Activated T-helper 2 cell treated with anti-CD3 and anti-CD28 coated beads, Interferon-gamma antibody, Interleukin-2, Interleukin-4, amounts not matched to agents 10 μg/mL and 5 μg/mL and 100 μg/mL, durations not matched to agents 14 hours and 24 hours and 36 hours (primary cell): ENCODE measurements at regions of chr22 and their contacts with region 1.

Region 1: DNA sequence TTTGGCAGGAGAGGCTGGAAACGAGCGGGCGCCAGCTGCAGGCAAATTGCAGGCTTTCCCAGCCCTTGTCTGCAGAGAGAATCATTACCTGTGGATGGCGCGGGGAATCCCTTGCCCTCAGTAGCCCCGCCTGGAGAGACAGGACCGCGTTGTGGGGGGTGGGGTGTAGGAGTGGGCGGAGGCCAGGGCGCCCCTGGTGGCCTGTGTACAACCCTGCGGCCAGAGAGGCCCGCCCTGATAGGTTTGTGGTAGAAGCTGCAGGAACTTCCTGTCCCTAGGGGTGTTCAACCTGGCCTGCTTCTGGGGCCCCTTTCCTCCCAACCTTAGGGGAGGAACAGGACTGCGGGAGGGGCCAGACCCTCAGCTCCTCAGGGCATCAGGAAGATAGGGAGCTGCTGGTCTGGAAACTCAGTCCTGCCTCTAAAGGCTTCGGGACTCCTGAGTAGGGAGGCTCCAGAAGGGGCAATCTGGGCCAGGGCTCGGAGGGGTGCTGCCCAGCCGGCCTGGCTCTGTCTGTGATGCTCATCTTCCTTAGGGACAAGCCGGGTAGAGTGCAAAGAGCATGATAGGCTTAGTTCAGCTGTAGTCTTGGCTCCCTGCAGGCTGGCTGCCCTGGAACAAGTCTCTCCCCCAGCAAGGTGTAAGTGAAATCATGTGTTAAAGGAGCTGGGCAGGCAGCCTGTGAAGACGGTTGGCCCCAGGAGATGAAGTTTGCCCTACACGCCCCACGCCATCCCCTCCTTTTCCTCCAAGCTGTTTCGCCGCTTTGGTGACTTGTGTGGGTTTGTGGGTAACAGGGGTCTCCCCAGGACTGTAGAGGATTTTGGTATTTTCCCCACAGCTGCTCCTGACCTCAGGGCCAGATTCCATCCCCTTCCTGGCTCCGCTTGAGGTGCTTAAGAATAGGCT is 24.1 kb upstream of the SUSD2 start:
- DNase-seq: peak; percentile 87
- H3K4me3 Mint-ChIP-seq: peak overlapping the region; percentile 85
- H3K27ac Mint-ChIP-seq: peak overlapping the region; percentile 86
- H3K4me1 Mint-ChIP-seq: peaks cover 45% of the 10 kb centered on the region
- H3K27me3 Mint-ChIP-seq: no peaks in the 10 kb centered on the region

Region 2: GRCh38 chr22:24011735-24012068 is 145.5 kb before region 1 on chr22:
- intact Hi-C with region 1: loop called (anchors 10 kb)
- DNase-seq: no peak
- H3K4me3 Mint-ChIP-seq: peak overlapping the region; percentile 96
- H3K27ac Mint-ChIP-seq: peak overlapping the region; percentile 95
- H3K4me1 Mint-ChIP-seq: peaks cover 17% of the 10 kb centered on the region
- H3K27me3 Mint-ChIP-seq: no peaks in the 10 kb centered on the region